H1 (cell line): ENCODE measurements at regions of chr10 and their contacts with region 1.

Region 1: DNA sequence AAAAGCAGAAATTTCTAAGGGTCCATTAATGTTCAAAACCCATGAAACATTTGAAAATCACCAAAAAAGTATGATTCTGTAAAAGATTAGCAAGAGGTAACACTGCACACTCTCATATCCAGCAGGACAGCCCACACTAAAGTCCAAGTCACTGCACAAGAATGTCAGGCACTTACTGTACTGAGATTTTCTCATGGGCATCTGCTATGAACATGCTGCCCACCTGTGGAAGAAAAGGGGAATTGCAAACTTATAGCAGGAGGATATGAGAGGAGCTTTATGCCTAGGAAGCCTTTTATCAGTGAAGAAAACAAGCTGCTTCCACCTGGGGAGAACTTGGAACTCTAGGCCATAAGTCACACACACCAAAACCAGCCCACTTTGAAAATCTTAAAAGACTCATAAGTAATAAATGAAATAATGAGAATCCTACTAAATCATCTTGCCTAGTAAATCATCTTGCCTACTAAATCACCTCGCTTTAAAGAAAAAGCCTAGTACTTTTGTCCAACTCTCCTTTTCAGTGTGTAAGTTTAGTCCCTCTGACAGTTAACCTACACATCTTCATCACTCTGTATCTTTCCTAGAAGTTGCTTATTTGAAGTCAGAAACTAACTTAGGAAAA is 46.1 kb downstream of the ARMH3 start:
- DNase-seq: peak in 1 of 2 experiments; percentile 17
- H3K4me3 ChIP-seq: no peak overlapping the region
- H3K27ac ChIP-seq: no peak overlapping the region
- H3K4me1 ChIP-seq: peaks cover 0 to 5% (median 2%) of the 10 kb centered on the region in 4 experiments; a peak in 3 of 7 replicates
- H3K27me3 ChIP-seq: no peaks in the 10 kb centered on the region
- CTCF ChIP-seq: peak in 2 of 3 experiments; percentile 95 to 99; a peak in 3 of 4 replicates
- EP300 ChIP-seq: no peak
- POLR2A ChIP-seq: no peak
- RAD21 ChIP-seq: peak; percentile 99

Region 2: DNA sequence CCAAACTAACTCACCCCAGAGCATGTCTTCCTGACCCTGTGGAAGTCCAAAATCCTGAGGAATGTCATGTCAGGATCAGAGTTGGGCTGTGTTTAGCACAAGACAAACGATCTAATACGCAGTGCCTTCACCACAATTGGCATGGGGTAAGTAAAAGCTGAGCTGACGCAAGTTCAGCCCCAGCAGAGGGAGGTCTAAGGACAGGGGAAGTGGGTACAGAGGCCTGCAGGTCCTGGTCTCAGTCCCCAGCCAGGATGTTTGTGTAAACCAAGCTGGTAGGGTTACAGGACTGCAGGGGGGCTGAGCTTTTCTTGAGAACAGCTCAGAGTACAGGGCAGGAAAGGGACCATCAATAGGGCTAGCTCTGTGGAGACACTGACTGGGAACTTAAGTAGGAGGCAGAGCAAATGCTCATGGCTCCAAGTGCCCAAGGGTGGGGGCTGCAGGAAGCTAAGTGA is 161.0 kb before region 1 on chr10:
- CTCF ChIA-PET with region 1: interaction called, 154 read pairs
- POLR2A ChIA-PET with region 1: no interaction called
- DNase-seq: no peak
- H3K4me3 ChIP-seq: no peak overlapping the region
- H3K27ac ChIP-seq: no peak overlapping the region
- H3K4me1 ChIP-seq: peaks cover 0 to 19% (median 4%) of the 10 kb centered on the region in 4 experiments; a peak in 5 of 7 replicates
- H3K27me3 ChIP-seq: no peaks in the 10 kb centered on the region; a peak in 1 of 7 replicates
- CTCF ChIP-seq: no peak
- EP300 ChIP-seq: no peak
- POLR2A ChIP-seq: no peak
- RAD21 ChIP-seq: no peak

Region 3: DNA sequence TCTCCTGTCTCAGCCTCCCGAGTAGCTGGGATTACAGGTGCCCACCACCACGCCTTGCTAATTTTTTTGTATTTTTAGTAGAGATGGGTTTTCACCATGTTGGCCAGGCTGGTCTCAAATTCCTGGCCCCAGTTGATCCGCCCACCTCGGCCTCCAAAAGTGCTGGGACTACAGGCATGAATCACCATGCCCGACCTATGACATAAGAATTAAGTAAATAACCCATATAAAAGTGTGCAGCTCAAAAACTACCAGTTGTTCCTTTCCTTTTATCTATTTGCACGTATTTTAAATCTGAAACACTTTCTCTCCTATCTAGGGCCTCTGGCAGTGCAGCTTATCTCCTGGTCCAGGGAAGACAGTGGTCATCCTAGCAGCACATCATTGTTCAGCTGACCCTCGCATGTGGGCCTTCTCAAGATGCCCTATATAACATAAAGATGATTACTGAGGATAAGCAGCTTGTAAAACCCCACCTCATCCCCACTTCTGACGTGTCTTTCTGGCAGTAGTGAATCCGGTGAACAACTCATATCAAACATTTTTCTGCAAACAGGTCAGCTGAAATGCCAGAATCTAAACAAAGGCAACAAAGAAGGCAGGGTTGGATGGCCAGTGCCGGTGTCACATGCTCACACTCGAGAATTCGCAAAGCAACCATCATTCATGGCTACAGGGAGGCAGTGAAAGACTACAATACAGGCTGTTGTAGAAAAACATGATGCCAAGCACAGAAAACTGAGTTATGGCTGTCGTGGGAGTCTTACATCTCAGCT is 130.3 kb before region 1 on chr10:
- CTCF ChIA-PET with region 1: interaction called, 210 read pairs
- POLR2A ChIA-PET with region 1: no interaction called
- DNase-seq: no peak
- H3K4me3 ChIP-seq: no peak overlapping the region
- H3K27ac ChIP-seq: no peak overlapping the region
- H3K4me1 ChIP-seq: peaks cover 0 to 2% (median 1%) of the 10 kb centered on the region in 4 experiments; a peak in 3 of 7 replicates
- H3K27me3 ChIP-seq: no peaks in the 10 kb centered on the region
- CTCF ChIP-seq: no peak
- EP300 ChIP-seq: no peak
- POLR2A ChIP-seq: no peak
- RAD21 ChIP-seq: no peak

Region 4: DNA sequence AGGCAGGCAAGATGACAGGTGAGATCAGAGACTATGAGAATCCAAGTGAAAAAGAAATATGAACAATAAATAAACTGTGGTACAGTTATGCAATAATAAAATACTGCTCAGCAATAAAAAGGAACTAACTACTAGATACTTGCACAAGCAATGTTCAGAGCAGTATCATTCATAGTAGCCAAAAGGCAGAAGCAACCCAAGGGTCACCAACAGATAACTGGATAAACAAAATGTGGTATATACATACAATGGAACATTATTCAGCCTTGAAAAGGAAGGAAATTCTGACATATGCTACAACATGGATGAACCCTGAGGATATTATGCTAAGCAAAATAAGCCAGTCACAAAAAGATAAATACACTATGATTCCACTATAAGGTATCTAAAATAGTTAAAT is 89.4 kb before region 1 on chr10:
- CTCF ChIA-PET with region 1: interaction called, 10 read pairs
- POLR2A ChIA-PET with region 1: no interaction called
- DNase-seq: no peak
- H3K4me3 ChIP-seq: no peak overlapping the region
- H3K27ac ChIP-seq: no peak overlapping the region
- H3K4me1 ChIP-seq: peaks cover 0 to 7% (median 6%) of the 10 kb centered on the region in 4 experiments; a peak in 4 of 7 replicates
- H3K27me3 ChIP-seq: no peaks in the 10 kb centered on the region
- CTCF ChIP-seq: no peak
- EP300 ChIP-seq: no peak
- POLR2A ChIP-seq: no peak
- RAD21 ChIP-seq: no peak

Region 5: GRCh38 chr10:102055647-102056419 is 45.9 kb after region 1 on chr10 and contains the start of gene ARMH3:
- CTCF ChIA-PET with region 1: interaction called, 16 read pairs
- POLR2A ChIA-PET with region 1: interaction called, 3 read pairs
- DNase-seq: peak; percentile 80 to 90
- H3K4me3 ChIP-seq: peak within 1 kb of the TSS; percentile 80 to 92 (median 82)
- H3K27ac ChIP-seq: peak within 1 kb of the TSS; percentile 53; the same call in 1 of the 2 replicates
- H3K4me1 ChIP-seq: no peaks in the 10 kb centered on the region
- H3K27me3 ChIP-seq: no peaks in the 10 kb centered on the region
- CTCF ChIP-seq: 0 out of 4 replicates have a peak, but pooled peaks of 1 of the 3 experiments have one; percentile 8
- EP300 ChIP-seq: 0 out of 3 replicates have a peak, but pooled peaks of 1 of the 2 experiments have one; percentile 15
- POLR2A ChIP-seq: peak in 1 of 2 experiments; percentile 60; a peak in 2 of 3 replicates
- RAD21 ChIP-seq: no peak
- total RNA-seq, gene ARMH3: 16.1 and 18.3 TPM in 2 replicates